ENCODE measurements at regions of chr1 and their contacts with region 1.

Region 1: DNA sequence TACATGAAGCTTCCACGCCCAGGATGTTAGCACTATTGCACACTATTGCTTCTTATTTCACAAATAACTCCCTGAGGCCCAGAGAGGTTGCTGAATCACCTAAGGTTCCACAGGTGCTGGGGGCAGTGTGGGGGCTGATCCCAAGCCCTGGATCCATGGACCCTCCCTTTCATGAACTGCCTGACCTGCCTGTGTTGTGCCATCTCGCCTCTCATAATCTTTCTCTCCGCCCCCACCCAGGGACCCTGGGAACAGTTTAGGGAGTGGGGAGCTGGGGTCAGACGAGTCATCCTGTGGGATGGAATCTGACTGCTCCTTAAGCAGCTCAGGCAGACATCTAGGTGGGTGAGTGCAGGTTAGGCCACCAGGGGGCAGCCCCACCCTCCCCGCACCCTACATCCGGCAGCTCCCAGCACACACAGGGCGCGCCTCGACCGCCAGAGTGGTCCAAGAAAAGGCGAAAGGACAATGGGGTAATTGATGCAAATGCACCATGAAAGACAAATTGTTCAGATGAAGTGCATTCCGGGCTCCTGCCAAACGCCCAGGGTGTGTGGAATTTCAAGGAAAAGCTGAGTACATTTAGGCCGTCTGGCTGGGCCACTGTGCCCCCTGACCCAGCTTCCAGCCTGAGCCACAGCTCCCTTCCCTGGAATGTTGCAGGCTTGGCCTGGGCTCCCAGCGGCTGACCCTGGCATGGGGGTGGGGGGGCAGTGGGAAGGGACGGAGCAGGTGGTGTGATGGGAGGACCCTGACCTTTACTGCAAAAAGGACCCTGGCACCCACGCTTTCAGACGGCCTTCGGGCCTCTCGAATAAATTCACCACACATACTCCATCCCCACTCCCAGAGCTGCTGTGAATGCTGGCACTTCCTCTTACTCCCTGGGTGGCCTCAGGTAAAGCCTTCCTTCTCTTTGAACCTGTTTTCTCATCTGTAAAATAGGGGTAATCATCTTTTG is 20.8 kb downstream of the PHLDA3 start:
- DNase-seq: peak; percentile 86 to 94 (median 92)
- ATAC-seq: peak; percentile 100
- H3K4me3 ChIP-seq: no peak overlapping the region
- H3K27ac ChIP-seq: no peak overlapping the region
- H3K4me1 ChIP-seq: peaks cover 0 to 11% of the 10 kb centered on the region in 2 experiments; a peak in 3 of 5 replicates
- H3K27me3 ChIP-seq: peaks cover 8 to 20% of the 10 kb centered on the region in 2 experiments
- CTCF ChIP-seq: peak; percentile 93 to 95 (median 94)
- EP300 ChIP-seq: no peak
- POLR2A ChIP-seq: no peak
- RAD21 ChIP-seq: peak; percentile 89 to 97

Region 2: GRCh38 chr1:201348211-201348566 is 100.0 kb before region 1 on chr1:
- CTCF ChIA-PET with region 1: no interaction called
- POLR2A ChIA-PET with region 1: no interaction called
- in situ Hi-C with region 1: no loop called
- intact Hi-C with region 1: no loop called
- DNase-seq: peak; percentile 69 to 81 (median 73)
- ATAC-seq: peak; percentile 96
- H3K4me3 ChIP-seq: no peak overlapping the region
- H3K27ac ChIP-seq: no peak overlapping the region
- H3K4me1 ChIP-seq: no peaks in the 10 kb centered on the region
- H3K27me3 ChIP-seq: peaks cover 0 to 44% of the 10 kb centered on the region in 2 experiments; a peak in 2 of 5 replicates
- CTCF ChIP-seq: peak; percentile 81 to 87 (median 83)
- EP300 ChIP-seq: no peak
- POLR2A ChIP-seq: no peak
- RAD21 ChIP-seq: peak in 1 of 2 experiments; percentile 65; a peak in 3 of 4 replicates

Region 3: GRCh38 chr1:201608635-201609395 is 160.6 kb after region 1 on chr1:
- CTCF ChIA-PET with region 1: no interaction called
- POLR2A ChIA-PET with region 1: no interaction called
- in situ Hi-C with region 1: no loop called
- intact Hi-C with region 1: no loop called
- DNase-seq: no peak
- ATAC-seq: peak; percentile 11; the same call in 2 of the 3 replicates
- H3K4me3 ChIP-seq: no peak overlapping the region
- H3K27ac ChIP-seq: no peak overlapping the region
- H3K4me1 ChIP-seq: peaks cover 0 to 6% of the 10 kb centered on the region in 2 experiments; a peak in 1 of 5 replicates
- H3K27me3 ChIP-seq: no peaks in the 10 kb centered on the region; a peak in 1 of 5 replicates
- CTCF ChIP-seq: no peak
- EP300 ChIP-seq: no peak
- POLR2A ChIP-seq: no peak
- RAD21 ChIP-seq: no peak

Region 4: GRCh38 chr1:201792534-201793305 is 344.5 kb after region 1 on chr1:
- CTCF ChIA-PET with region 1: no interaction called
- POLR2A ChIA-PET with region 1: no interaction called
- in situ Hi-C with region 1: no loop called
- intact Hi-C with region 1: loop called (anchors 10 kb)
- DNase-seq: peak; percentile 80 to 86 (median 84)
- ATAC-seq: peak; percentile 98
- H3K4me3 ChIP-seq: no peak overlapping the region
- H3K27ac ChIP-seq: no peak overlapping the region
- H3K4me1 ChIP-seq: no peaks in the 10 kb centered on the region
- H3K27me3 ChIP-seq: no peaks in the 10 kb centered on the region; a peak in 1 of 5 replicates
- CTCF ChIP-seq: peak; percentile 95 to 99 (median 98)
- EP300 ChIP-seq: no peak
- POLR2A ChIP-seq: no peak
- RAD21 ChIP-seq: peak; percentile 97 to 99

Region 5: DNA sequence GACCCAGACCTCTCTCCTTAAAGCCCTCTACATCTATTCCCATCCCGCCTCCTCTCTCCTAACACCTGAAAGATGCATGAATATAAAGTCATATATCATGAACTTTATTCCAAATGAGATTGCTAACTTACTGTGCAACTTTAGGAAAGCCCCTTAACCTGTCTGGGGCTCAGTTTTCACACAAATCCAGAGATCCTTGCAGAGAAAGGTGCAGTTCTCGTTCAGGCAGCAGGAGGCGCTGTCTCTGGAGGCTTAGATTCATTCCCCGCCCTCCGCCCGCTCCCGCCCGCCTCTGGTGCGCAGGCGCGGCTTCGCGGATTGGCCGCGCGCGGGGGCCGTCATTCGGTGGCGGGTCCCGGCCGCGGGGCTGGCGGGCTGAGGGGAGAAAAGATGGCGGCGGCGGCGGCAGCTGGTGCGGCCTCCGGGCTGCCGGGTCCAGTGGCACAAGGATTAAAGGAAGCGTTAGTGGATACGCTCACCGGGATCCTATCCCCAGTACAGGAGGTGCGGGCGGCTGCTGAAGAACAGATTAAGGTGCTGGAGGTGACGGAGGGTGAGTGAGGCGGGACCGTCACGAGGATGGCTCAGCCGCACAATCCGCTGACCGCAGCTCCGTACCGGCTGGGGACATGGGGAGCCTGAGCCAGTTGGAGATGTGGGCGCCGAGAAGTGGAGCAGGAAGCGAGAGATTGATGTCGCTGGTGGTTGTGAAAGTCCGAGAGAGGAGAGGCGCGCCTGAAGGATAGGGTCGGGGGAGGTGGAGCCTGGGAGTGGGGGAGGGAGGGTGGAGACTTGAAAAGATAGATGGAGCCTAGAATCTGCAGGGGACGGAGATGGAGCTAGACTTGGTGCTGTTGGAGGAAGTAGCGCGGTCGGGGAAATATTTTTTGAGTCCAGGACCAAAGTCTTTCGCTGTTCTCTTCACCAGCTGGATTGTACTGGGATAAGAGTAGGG is 380.9 kb after region 1 on chr1 and contains the start of gene IPO9:
- CTCF ChIA-PET with region 1: no interaction called
- POLR2A ChIA-PET with region 1: no interaction called
- in situ Hi-C with region 1: no loop called
- intact Hi-C with region 1: no loop called
- DNase-seq: peak; percentile 98 to 100 (median 99)
- ATAC-seq: peak; percentile 92
- H3K4me3 ChIP-seq: peak within 1 kb of the TSS; percentile 94
- H3K27ac ChIP-seq: peak within 1 kb of the TSS; percentile 95
- H3K4me1 ChIP-seq: peaks cover 12 to 42% of the 10 kb centered on the region in 2 experiments
- H3K27me3 ChIP-seq: no peaks in the 10 kb centered on the region
- CTCF ChIP-seq: peak; percentile 92 to 98 (median 97)
- EP300 ChIP-seq: peak; percentile 6; the same call in 1 of the 2 replicates
- POLR2A ChIP-seq: peak; percentile 98
- RAD21 ChIP-seq: peak in 1 of 2 experiments; percentile 16; a peak in 1 of 4 replicates
- polyA plus RNA-seq, gene IPO9: 28.1 to 49.6 TPM

Measured in K562 (cell line).